ENCODE measurements at regions of chr17 and their contacts with region 1.

Region 1: DNA sequence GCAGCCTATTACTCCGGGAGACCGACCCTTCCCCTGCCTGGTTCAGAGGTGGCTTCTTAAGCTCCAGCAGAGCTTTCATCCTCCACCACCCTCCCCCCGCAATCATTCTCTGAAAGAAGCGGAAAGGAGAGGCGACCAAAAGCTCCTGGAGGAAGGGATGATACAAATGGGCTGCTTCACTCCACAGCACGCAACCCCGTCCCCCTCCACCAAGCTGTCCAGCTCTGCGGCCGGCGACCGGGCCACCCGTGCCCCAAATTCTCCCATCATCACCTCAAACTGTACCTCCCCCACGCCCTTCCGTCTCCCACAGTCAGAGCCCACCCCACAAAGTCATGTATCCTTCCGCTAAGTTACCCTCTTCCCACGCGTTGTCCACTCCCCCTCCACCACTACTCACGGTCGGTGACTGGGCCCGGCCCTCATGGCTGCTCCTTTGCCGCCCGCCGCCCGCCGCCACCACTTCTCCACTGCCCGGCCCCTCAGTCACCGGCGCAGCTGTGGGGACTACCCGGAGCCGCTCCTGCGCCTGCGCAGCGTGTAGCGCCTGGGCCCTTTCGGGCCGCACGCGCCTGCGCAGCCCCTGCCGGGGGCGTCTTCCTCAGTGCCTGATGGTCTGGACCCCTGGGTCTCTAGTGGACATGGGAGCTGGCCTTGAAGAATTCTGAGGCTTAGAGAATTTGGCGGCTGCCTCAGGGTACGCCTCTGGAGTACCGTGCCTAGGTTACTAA is at the start of gene FAM222B:
- DNase-seq: peak; percentile 84
- ATAC-seq: peak; percentile 98
- H3K4me3 Mint-ChIP-seq: peak within 1 kb of the TSS; percentile 96
- H3K27ac Mint-ChIP-seq: peak within 1 kb of the TSS; percentile 91
- H3K4me1 Mint-ChIP-seq: peaks cover 24% of the 10 kb centered on the region
- H3K27me3 Mint-ChIP-seq: no peaks in the 10 kb centered on the region
- CTCF ChIP-seq: no peak
- total RNA-seq, gene FAM222B: 15.6 and 16.0 TPM in 2 replicates

Region 2: GRCh38 chr17:28812091-28812747 is 30.2 kb before region 1 on chr17:
- CTCF ChIA-PET with region 1: no interaction called
- POLR2A ChIA-PET with region 1: no interaction called
- intact Hi-C with region 1: loop called (anchors 2 kb)
- DNase-seq: peak; percentile 89
- ATAC-seq: peak; percentile 100
- H3K4me3 Mint-ChIP-seq: peak overlapping the region; percentile 87
- H3K27ac Mint-ChIP-seq: peak overlapping the region; percentile 83
- H3K4me1 Mint-ChIP-seq: peaks cover 31% of the 10 kb centered on the region
- H3K27me3 Mint-ChIP-seq: no peaks in the 10 kb centered on the region
- CTCF ChIP-seq: no peak

Region 3: DNA sequence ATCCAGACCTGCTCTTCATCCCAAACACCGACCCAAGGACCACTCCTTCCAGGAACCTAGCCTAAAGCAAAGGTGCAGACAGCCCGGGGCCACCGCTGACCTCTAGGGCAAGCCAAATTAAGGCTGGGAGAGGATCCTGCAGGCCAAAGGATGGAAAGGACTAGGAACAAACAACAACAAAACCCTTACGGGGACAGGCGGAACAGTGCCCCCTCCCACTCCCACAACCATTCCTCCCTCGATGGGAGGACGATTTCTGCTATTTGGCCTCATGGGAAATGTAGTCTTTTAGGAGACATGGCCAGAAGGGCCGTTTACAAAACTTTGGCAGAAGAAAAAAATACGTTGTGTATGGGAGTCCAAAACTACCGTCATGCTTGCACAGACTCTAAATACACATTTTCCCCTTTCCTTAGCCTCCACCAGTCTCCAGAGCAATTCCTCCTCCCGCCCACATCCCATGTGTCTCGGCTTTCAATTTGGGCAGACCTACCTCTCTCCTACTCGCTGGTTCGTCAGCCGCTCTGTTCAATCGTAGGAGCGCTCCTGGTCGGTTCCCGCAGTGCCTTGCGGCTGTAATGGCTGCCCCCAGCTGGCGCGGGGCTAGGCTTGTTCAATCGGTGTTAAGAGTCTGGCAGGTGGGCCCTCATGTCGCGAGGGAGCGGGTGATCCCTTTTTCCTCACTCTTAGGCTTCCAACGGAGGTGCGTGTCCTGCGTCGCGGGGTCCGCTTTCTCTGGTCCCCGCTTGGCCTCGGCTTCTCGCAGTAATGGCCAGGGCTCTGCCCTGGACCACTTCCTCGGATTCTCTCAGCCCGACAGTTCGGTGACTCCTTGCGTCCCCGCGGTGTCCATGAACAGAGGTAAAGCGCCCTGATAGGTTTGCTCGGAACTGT is 12.3 kb after region 1 on chr17 and contains the start of gene ERAL1:
- CTCF ChIA-PET with region 1: interaction called, 6 read pairs
- POLR2A ChIA-PET with region 1: interaction called, 11 read pairs
- intact Hi-C with region 1: loop called (anchors 1 kb)
- DNase-seq: peak; percentile 67
- ATAC-seq: peak; percentile 99
- H3K4me3 Mint-ChIP-seq: peak within 1 kb of the TSS; percentile 89
- H3K27ac Mint-ChIP-seq: peak within 1 kb of the TSS; percentile 80
- H3K4me1 Mint-ChIP-seq: peaks cover 25% of the 10 kb centered on the region
- H3K27me3 Mint-ChIP-seq: no peaks in the 10 kb centered on the region
- CTCF ChIP-seq: no peak
- total RNA-seq, gene ERAL1: 47.6 and 49.2 TPM in 2 replicates

Region 4: GRCh38 chr17:28889996-28890395 is 47.5 kb after region 1 on chr17:
- CTCF ChIA-PET with region 1: no interaction called
- POLR2A ChIA-PET with region 1: interaction called, 15 read pairs
- intact Hi-C with region 1: no loop called
- DNase-seq: no peak
- ATAC-seq: no peak
- H3K4me3 Mint-ChIP-seq: peak overlapping the region; percentile 35
- H3K27ac Mint-ChIP-seq: peak overlapping the region; percentile 65
- H3K4me1 Mint-ChIP-seq: peaks cover 86% of the 10 kb centered on the region
- H3K27me3 Mint-ChIP-seq: no peaks in the 10 kb centered on the region
- CTCF ChIP-seq: no peak

Region 5: GRCh38 chr17:28896884-28897768 is 54.7 kb after region 1 on chr17 and contains the start of gene FLOT2:
- CTCF ChIA-PET with region 1: interaction called, 11 read pairs
- POLR2A ChIA-PET with region 1: interaction called, 20 read pairs
- intact Hi-C with region 1: no loop called
- DNase-seq: peak; percentile 66
- ATAC-seq: peak; percentile 58
- H3K4me3 Mint-ChIP-seq: peak within 1 kb of the TSS; percentile 96
- H3K27ac Mint-ChIP-seq: peak within 1 kb of the TSS; percentile 86
- H3K4me1 Mint-ChIP-seq: peaks cover 81% of the 10 kb centered on the region
- H3K27me3 Mint-ChIP-seq: no peaks in the 10 kb centered on the region
- CTCF ChIP-seq: no peak
- total RNA-seq, gene FLOT2: 303 and 321 TPM in 2 replicates

Region 6: GRCh38 chr17:29111816-29112499 is 269.5 kb after region 1 on chr17:
- CTCF ChIA-PET with region 1: no interaction called
- POLR2A ChIA-PET with region 1: no interaction called
- intact Hi-C with region 1: no loop called
- DNase-seq: peak; percentile 62
- ATAC-seq: peak; percentile 85
- H3K4me3 Mint-ChIP-seq: no peak overlapping the region
- H3K27ac Mint-ChIP-seq: no peak overlapping the region
- H3K4me1 Mint-ChIP-seq: peaks cover 4% of the 10 kb centered on the region
- H3K27me3 Mint-ChIP-seq: no peaks in the 10 kb centered on the region
- CTCF ChIP-seq: peak; percentile 31

Measured in activated B cell treated with CpG ODN at 0.5 μM for 24 hours (primary cell).